Activated T-helper 1 cell treated with anti-CD3 and anti-CD28 coated beads, Interleukin-12 subunit alpha, Interleukin-12 subunit beta, Interleukin-2, Interleukin-4 antibody, amounts not matched to agents 30 ng/mL and 10 ng/mL and 1 ng/mL, durations not matched to agents 14 hours and 24 hours and 36 hours (primary cell): ENCODE measurements at regions of chr5 and their contacts with region 1.

Region 1: DNA sequence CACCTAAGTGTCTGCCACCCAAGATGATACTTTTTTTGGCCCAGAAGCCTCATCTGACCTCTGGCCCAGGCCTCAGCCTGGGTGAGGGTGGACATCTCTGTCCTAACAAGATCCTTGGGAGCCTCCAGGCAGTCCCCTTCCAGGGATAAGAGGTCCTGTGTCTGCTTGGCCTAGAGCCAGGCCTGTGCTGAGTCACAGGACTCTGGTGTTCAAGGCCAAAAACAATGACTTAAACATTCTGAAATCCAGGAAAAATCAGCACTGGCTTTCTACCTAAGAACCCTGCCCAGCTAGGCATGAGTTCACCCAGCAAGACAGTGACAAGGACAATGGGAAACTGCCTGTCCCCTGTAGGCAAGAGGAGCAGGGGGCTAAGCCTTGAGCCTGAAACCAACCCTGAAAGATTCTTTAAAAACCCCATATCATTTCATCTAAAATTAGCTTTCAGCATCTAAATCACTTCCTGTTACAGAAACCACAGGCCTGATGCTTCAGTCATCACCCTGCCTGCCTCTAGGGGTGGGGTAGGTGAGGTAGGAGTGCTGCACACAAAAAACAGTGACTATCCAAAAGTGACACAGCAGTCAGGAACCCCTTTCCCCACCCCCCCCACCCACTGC is 29.9 kb downstream of the CSF2 start:
- DNase-seq: peak; percentile 78
- H3K4me3 Mint-ChIP-seq: peak overlapping the region; percentile 70
- H3K27ac Mint-ChIP-seq: peak overlapping the region; percentile 100
- H3K4me1 Mint-ChIP-seq: peaks cover 91% of the 10 kb centered on the region
- H3K27me3 Mint-ChIP-seq: no peaks in the 10 kb centered on the region

Region 2: DNA sequence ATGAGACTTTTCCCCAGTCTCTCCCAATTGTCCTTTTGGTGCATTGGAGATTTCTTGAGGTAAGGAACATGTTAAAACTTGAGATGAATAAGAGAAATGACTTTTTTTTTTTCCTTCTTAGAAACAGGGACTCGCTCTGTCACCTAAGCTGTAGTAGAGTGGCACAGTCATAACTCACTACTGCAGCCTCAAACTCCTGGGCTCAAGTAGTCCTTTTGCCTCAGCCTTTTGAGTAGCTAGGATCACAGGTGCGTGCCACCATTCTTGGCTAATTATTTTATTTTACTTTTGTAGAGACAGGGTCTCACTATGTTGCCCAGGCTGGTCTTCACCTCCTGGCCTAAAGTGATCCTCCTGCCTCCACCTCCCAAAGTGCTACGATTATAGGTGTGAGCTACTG is 813.7 kb before region 1 on chr5:
- intact Hi-C with region 1: loop called (anchors 5 kb)
- DNase-seq: no peak
- H3K4me3 Mint-ChIP-seq: peak overlapping the region; percentile 77
- H3K27ac Mint-ChIP-seq: peak overlapping the region; percentile 96
- H3K4me1 Mint-ChIP-seq: peaks cover 49% of the 10 kb centered on the region
- H3K27me3 Mint-ChIP-seq: no peaks in the 10 kb centered on the region

Region 3: GRCh38 chr5:131796793-131797693 is 306.4 kb before region 1 on chr5 and contains the start of gene FNIP1:
- intact Hi-C with region 1: loop called (anchors 2 kb)
- DNase-seq: peak; percentile 98
- H3K4me3 Mint-ChIP-seq: peak within 1 kb of the TSS; percentile 97
- H3K27ac Mint-ChIP-seq: peak within 1 kb of the TSS; percentile 93
- H3K4me1 Mint-ChIP-seq: peaks cover 21% of the 10 kb centered on the region
- H3K27me3 Mint-ChIP-seq: peaks cover under 1% of the 10 kb centered on the region
- total RNA-seq, gene FNIP1: 18.8 and 19.0 TPM in 2 replicates

Region 4: GRCh38 chr5:132073231-132074013 is 30.0 kb before region 1 on chr5 and contains the start of gene CSF2:
- intact Hi-C with region 1: loop called (anchors 1 kb)
- DNase-seq: no peak
- H3K4me3 Mint-ChIP-seq: peak within 1 kb of the TSS; percentile 90
- H3K27ac Mint-ChIP-seq: peak within 1 kb of the TSS; percentile 97
- H3K4me1 Mint-ChIP-seq: peaks cover 92% of the 10 kb centered on the region
- H3K27me3 Mint-ChIP-seq: peaks cover 1% of the 10 kb centered on the region
- total RNA-seq, gene CSF2: 1,648 and 1,678 TPM in 2 replicates

Region 5: DNA sequence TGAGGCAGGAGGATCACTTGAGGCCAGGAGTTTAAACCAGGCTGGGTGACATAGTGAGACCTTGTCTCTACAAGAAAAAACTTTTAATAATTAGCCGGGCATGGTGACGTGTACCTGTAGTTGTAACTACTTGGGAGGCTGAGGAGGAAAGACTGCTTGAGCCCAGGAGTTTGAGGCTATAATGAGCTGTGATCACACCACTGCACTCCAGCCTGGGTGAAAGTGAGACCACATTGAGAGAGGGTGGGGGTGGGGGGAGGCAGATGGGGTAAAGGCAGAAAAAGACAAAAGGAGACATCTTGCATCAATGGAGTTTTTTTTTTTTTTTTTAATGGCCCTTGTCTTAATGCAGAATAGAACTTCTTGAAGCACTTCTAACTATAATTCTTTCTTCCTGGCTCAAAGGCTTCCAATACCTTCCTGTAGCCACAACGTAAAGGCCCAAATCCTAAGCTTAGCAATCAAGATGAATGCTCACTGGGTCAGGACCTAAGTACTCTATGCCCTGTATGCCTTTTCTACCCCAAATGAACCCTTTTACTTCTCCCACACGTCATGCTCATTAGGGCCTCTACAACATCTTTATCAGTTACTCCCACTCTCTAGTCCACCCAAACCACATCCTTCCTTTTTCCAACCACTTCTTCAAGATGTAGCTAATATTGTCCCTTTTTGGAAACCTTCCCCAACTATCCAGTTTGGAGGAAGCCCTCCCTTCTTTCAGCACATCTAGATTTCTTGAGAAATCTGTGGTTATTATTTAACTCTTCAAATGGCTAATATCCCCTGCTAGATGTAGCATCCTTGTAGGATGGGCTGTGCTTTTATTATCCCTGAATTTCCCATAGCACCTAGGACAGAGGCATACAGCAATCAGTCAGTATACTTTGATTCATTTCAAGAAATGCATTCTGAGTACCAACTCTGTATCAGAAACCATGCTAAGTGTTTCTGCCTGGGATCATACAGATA is 11.0 kb after region 1 on chr5:
- intact Hi-C with region 1: loop called (anchors 1 kb)
- DNase-seq: no peak
- H3K4me3 Mint-ChIP-seq: no peak overlapping the region
- H3K27ac Mint-ChIP-seq: peak overlapping the region; percentile 88
- H3K4me1 Mint-ChIP-seq: peaks cover 69% of the 10 kb centered on the region
- H3K27me3 Mint-ChIP-seq: no peaks in the 10 kb centered on the region

Region 6: GRCh38 chr5:132180134-132180745 is 76.8 kb after region 1 on chr5:
- intact Hi-C with region 1: loop called (anchors 1 kb)
- DNase-seq: no peak
- H3K4me3 Mint-ChIP-seq: no peak overlapping the region
- H3K27ac Mint-ChIP-seq: peak overlapping the region; percentile 25
- H3K4me1 Mint-ChIP-seq: peaks cover 45% of the 10 kb centered on the region
- H3K27me3 Mint-ChIP-seq: no peaks in the 10 kb centered on the region

Region 7: DNA sequence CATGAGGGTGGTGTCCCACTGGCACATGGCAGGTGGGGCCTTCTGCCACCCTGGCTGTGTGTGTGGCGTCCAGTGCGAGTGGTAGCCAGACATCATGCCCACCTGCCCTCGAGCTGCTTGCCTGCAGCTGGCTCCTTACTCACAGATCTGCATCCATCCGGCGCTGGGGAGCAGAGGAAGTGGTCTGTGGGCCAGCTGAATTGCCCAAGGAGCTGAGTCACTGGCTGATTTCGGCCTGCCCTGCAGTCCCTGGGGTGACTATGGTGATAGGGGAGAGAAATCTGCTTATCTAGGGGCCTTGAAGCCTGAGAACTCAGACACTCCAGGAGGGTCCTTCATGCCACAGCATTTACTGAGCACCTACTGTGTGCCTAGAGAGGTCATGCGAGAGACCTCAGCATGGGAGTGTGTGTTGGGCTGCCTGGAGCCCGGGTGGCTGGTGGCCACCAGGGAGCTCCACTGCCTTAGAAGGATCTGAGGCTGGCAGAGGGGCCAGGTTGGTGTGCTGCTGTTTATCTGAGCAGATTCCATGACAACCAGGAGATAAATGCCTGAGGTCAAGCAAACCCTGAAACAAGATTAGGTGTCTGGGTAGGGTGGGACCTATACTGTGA is 323.2 kb after region 1 on chr5:
- intact Hi-C with region 1: loop called (anchors 1 kb)
- DNase-seq: peak; percentile 67
- H3K4me3 Mint-ChIP-seq: peak overlapping the region; percentile 72
- H3K27ac Mint-ChIP-seq: peak overlapping the region; percentile 98
- H3K4me1 Mint-ChIP-seq: peaks cover 97% of the 10 kb centered on the region
- H3K27me3 Mint-ChIP-seq: no peaks in the 10 kb centered on the region